ENCODE measurements at regions of chr20 and their contacts with region 1.

Region 1: DNA sequence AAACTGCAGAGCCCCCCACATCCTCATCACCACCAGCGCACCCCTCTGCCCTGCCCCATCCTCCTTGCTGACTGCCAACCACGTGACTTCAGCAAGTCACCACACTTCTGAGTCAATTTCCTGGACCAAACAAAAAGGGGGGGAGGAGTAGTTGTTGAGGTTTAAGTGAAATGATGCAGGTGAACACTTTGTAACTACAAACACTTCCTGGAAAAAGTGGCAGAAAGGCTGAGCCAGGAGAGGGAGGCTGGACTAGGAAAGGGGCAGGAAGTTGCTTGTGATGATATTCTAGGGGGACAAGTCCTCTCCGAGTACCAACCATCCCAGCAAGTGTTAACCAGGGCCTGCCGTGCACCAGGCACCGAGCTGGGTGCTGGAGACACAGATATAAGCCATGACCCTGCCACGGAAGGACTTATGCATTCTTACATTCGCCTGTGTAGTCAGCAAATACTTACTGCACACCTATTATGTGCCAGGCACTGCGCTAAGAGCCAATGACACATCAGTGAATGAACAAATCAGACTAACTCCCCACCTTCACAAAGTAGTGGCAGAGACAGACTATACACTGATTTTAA is 67.3 kb downstream of the PREX1 start:
- DNase-seq: peak; percentile 73 to 86 (median 81)
- H3K4me3 ChIP-seq: peak overlapping the region in 1 of 3 experiments; percentile 52
- H3K4me3 Mint-ChIP-seq: peak overlapping the region; percentile 54 to 81
- H3K27ac ChIP-seq: peak overlapping the region; percentile 93 to 96
- H3K27ac Mint-ChIP-seq: peak overlapping the region; percentile 93 to 99 (median 98)
- H3K4me1 ChIP-seq: peaks cover 93 to 100% of the 10 kb centered on the region in 2 donors
- H3K4me1 Mint-ChIP-seq: peaks cover 100% of the 10 kb centered on the region
- H3K27me3 ChIP-seq: no peaks in the 10 kb centered on the region
- H3K27me3 Mint-ChIP-seq: peaks cover 0 to 3% (median 0%) of the 10 kb centered on the region in 3 donors
- CTCF ChIP-seq: no peak

Region 2: DNA sequence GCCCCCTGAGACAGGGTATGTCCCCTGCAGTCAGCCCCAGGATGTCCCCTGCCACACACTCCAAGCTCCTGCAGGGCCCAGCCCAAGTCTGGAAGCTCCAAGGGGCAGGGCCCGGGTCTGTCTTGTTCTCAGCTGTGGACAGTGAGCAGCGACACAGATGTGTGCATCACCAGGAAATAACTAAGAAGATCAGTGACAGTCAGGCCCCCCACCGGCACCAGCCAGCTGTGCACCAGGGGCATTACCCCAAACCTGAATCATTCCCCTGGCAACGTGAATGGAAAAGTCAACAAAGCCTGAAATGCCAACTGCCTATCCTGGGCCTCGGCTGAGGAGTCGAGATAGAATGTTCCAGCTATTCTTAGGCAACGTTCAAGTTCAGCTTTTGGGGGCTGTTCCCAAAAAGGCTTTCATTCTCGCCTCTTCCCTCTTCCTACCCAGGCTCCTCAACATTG is 37.7 kb before region 1 on chr20:
- intact Hi-C with region 1: loop called in 1 of 2 experiments (anchors 5 kb)
- DNase-seq: peak; percentile 41 to 83 (median 68)
- H3K4me3 ChIP-seq: peak overlapping the region in 1 of 3 experiments; percentile 56
- H3K4me3 Mint-ChIP-seq: peak overlapping the region; percentile 53 to 80
- H3K27ac ChIP-seq: peak overlapping the region; percentile 91 to 98
- H3K27ac Mint-ChIP-seq: peak overlapping the region; percentile 96 to 99 (median 98)
- H3K4me1 ChIP-seq: peaks cover 79 to 88% of the 10 kb centered on the region in 2 donors
- H3K4me1 Mint-ChIP-seq: peaks cover 91% of the 10 kb centered on the region
- H3K27me3 ChIP-seq: no peaks in the 10 kb centered on the region
- H3K27me3 Mint-ChIP-seq: peaks cover 0 to 4% (median 2%) of the 10 kb centered on the region in 3 donors
- CTCF ChIP-seq: no peak

Region 3: GRCh38 chr20:48776306-48776705 is 15.8 kb after region 1 on chr20:
- intact Hi-C with region 1: loop called in 1 of 2 experiments (anchors 2 kb)
- DNase-seq: peak; percentile 48 to 93 (median 62)
- H3K4me3 ChIP-seq: no peak overlapping the region
- H3K4me3 Mint-ChIP-seq: peak overlapping the region in 1 of 2 donors; percentile 41
- H3K27ac ChIP-seq: peak overlapping the region; percentile 89 to 94
- H3K27ac Mint-ChIP-seq: peak overlapping the region; percentile 98 to 100 (median 99)
- H3K4me1 ChIP-seq: peaks cover 73 to 93% of the 10 kb centered on the region in 2 donors
- H3K4me1 Mint-ChIP-seq: peaks cover 82% of the 10 kb centered on the region
- H3K27me3 ChIP-seq: no peaks in the 10 kb centered on the region
- H3K27me3 Mint-ChIP-seq: peaks cover 0 to 1% (median 0%) of the 10 kb centered on the region in 3 donors
- CTCF ChIP-seq: no peak

Measured in CD14-positive monocyte (primary cell).